CD8-positive, alpha-beta T cell (primary cell): ENCODE measurements at regions of chr6 and their contacts with region 1.

Region 1: DNA sequence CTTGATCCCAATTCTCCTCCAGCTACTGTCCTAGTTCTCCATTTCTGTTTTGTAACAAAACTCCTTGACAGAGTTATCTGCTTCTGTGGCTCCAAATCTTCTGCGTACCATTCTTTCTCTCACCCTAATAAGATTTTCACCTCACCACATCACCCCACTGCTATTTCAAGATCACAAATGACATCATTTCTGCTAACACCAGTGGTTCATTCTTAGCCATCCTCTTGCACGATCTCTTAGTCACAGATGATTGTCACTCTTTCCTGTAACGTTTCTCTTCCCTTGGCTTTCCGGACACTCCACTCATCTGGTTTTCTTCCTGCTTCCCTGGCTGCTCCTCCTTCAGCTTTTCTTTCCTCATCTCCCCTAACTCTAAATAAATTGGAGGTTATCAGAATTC is 56.8 kb upstream of the FABP7 start:
- DNase-seq: no peak
- ATAC-seq: no peak
- H3K4me3 ChIP-seq: no peak overlapping the region
- H3K4me3 Mint-ChIP-seq: no peak overlapping the region
- H3K27ac ChIP-seq: no peak overlapping the region
- H3K27ac Mint-ChIP-seq: no peak overlapping the region
- H3K4me1 ChIP-seq: no peaks in the 10 kb centered on the region
- H3K4me1 Mint-ChIP-seq: no peaks in the 10 kb centered on the region
- H3K27me3 ChIP-seq: no peaks in the 10 kb centered on the region
- H3K27me3 Mint-ChIP-seq: peaks cover 2% of the 10 kb centered on the region
- CTCF ChIP-seq: no peak

Region 2: GRCh38 chr6:122484760-122485159 is 238.0 kb before region 1 on chr6:
- CTCF ChIA-PET with region 1: no interaction called
- POLR2A ChIA-PET with region 1: no interaction called
- intact Hi-C with region 1: loop called in 1 of 2 experiments (anchors 5 kb)
- DNase-seq: no peak
- ATAC-seq: no peak
- H3K4me3 ChIP-seq: no peak overlapping the region
- H3K4me3 Mint-ChIP-seq: no peak overlapping the region
- H3K27ac ChIP-seq: no peak overlapping the region
- H3K27ac Mint-ChIP-seq: no peak overlapping the region
- H3K4me1 ChIP-seq: no peaks in the 10 kb centered on the region
- H3K4me1 Mint-ChIP-seq: no peaks in the 10 kb centered on the region
- H3K27me3 ChIP-seq: no peaks in the 10 kb centered on the region
- H3K27me3 Mint-ChIP-seq: no peaks in the 10 kb centered on the region
- CTCF ChIP-seq: no peak

Region 3: DNA sequence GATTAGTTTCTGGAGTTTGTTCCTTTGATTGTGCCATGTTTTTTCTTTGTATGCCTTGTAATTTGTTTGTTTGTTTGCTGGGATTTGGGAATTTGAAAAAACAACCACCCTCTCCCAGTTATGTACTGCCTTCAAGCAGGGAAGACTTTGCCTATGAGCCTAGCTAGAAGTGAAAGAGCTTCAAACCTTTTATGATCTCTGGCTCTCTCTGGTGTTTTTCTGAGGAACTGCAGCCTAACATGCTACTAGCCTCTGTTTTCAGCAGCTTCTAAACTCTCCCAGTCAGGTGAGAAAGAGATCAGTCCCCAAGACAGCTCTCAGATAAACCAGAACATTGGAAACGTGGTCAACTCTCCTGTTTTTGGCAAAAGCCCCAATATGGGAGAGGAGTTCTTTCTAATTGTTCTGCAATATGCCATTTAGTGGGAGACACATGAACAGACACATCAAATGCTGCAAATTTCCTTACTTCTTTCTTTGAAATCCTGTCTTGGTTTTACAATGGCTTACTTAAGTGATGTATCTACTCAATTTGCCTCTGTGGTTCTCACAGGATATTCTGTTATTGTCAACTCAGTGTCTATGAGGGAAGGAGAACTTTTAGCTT is 192.2 kb before region 1 on chr6:
- CTCF ChIA-PET with region 1: no interaction called
- POLR2A ChIA-PET with region 1: no interaction called
- intact Hi-C with region 1: no loop called
- DNase-seq: peak; percentile 18 to 77 (median 54)
- ATAC-seq: peak; percentile 99
- H3K4me3 ChIP-seq: no peak overlapping the region
- H3K4me3 Mint-ChIP-seq: no peak overlapping the region
- H3K27ac ChIP-seq: no peak overlapping the region
- H3K27ac Mint-ChIP-seq: no peak overlapping the region
- H3K4me1 ChIP-seq: no peaks in the 10 kb centered on the region
- H3K4me1 Mint-ChIP-seq: no peaks in the 10 kb centered on the region
- H3K27me3 ChIP-seq: no peaks in the 10 kb centered on the region
- H3K27me3 Mint-ChIP-seq: peaks cover 28% of the 10 kb centered on the region
- CTCF ChIP-seq: peak; percentile 85